B cell (primary cell): ENCODE measurements at regions of chr6 and their contacts with region 1.

Region 1: GRCh38 chr6:109073344-109074132 is 21.1 kb downstream of the SESN1 start:
- DNase-seq: peak; percentile 83
- ATAC-seq: peak; percentile 49
- H3K4me3 ChIP-seq: no peak overlapping the region
- H3K4me3 Mint-ChIP-seq: no peak overlapping the region
- H3K27ac ChIP-seq: no peak overlapping the region
- H3K27ac Mint-ChIP-seq: no peak overlapping the region
- H3K4me1 ChIP-seq: peaks cover 0 to 8% of the 10 kb centered on the region in 2 donors
- H3K4me1 Mint-ChIP-seq: peaks cover 5% of the 10 kb centered on the region
- H3K27me3 ChIP-seq: no peaks in the 10 kb centered on the region
- H3K27me3 Mint-ChIP-seq: no peaks in the 10 kb centered on the region
- CTCF ChIP-seq: peak; percentile 85

Region 2: GRCh38 chr6:108541838-108542759 is 531.4 kb before region 1 on chr6:
- CTCF ChIA-PET with region 1: interaction called, 247 read pairs
- POLR2A ChIA-PET with region 1: no interaction called
- intact Hi-C with region 1: loop called (anchors 1 kb)
- DNase-seq: peak; percentile 87
- ATAC-seq: peak; percentile 84
- H3K4me3 ChIP-seq: no peak overlapping the region
- H3K4me3 Mint-ChIP-seq: no peak overlapping the region
- H3K27ac ChIP-seq: no peak overlapping the region
- H3K27ac Mint-ChIP-seq: no peak overlapping the region
- H3K4me1 ChIP-seq: peaks cover 15 to 17% of the 10 kb centered on the region in 2 donors
- H3K4me1 Mint-ChIP-seq: peaks cover 12% of the 10 kb centered on the region
- H3K27me3 ChIP-seq: peaks cover 0 to 2% (median 0%) of the 10 kb centered on the region in 4 experiments
- H3K27me3 Mint-ChIP-seq: peaks cover 9% of the 10 kb centered on the region
- CTCF ChIP-seq: peak; percentile 93

Region 3: DNA sequence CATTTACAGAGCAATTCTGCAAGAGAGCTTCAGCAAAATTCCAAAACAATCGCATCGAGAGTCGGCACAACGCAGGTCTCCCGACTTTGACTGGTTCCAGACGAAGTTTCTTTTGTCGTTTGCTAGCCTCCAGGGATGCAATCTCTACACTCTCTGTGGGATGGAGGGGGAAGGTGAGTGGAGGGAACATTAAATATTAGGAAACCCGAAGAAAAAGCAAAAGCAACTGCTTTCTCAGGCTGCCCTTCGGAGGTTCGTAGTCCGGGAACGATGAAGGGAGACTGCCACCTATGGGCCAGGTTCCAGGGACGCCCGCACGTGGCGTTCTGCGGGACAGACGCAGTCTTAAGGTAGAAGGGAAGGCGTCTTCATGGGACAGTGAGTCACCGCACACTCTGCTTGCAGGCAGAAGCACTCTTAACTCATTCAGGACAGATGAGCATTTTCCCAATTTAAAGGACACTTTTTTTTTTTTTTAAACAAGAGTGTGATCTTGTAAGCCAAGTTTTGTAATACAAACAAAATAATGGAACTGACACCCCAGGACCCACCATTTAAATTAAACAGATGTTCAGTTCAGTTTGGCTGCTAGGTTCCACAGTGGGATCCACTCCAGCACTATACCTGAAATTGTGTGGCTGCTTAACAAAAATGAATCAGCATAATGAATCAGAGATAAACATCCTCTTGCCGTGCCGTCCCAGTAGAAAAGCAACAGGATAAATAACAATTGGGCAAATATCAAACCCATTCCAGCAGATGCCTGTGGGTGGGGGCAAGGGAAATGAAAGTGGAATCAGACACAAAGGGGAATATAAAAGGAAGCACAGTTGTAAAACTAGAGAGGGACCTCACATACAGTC is 291.1 kb before region 1 on chr6:
- CTCF ChIA-PET with region 1: interaction called, 6 read pairs
- POLR2A ChIA-PET with region 1: no interaction called
- intact Hi-C with region 1: loop called (anchors 1 kb)
- DNase-seq: peak; percentile 84
- ATAC-seq: peak; percentile 96
- H3K4me3 ChIP-seq: peak overlapping the region; percentile 43 to 78 (median 59)
- H3K4me3 Mint-ChIP-seq: peak overlapping the region; percentile 81
- H3K27ac ChIP-seq: no peak overlapping the region
- H3K27ac Mint-ChIP-seq: no peak overlapping the region
- H3K4me1 ChIP-seq: peaks cover 23 to 31% of the 10 kb centered on the region in 2 donors
- H3K4me1 Mint-ChIP-seq: peaks cover 25% of the 10 kb centered on the region
- H3K27me3 ChIP-seq: peaks cover 0 to 20% (median 8%) of the 10 kb centered on the region in 4 experiments
- H3K27me3 Mint-ChIP-seq: peaks cover 27% of the 10 kb centered on the region
- CTCF ChIP-seq: peak; percentile 84

Region 4: GRCh38 chr6:108896111-108896661 is 177.4 kb before region 1 on chr6:
- CTCF ChIA-PET with region 1: interaction called, 16 read pairs
- POLR2A ChIA-PET with region 1: no interaction called
- intact Hi-C with region 1: loop called (anchors 1 kb)
- DNase-seq: no peak
- ATAC-seq: no peak
- H3K4me3 ChIP-seq: peak overlapping the region in 1 of 5 experiments; percentile 16
- H3K4me3 Mint-ChIP-seq: peak overlapping the region; percentile 2
- H3K27ac ChIP-seq: peak overlapping the region in 1 of 2 donors; percentile 39
- H3K27ac Mint-ChIP-seq: peak overlapping the region; percentile 2
- H3K4me1 ChIP-seq: peaks cover 22 to 28% of the 10 kb centered on the region in 2 donors
- H3K4me1 Mint-ChIP-seq: peaks cover 17% of the 10 kb centered on the region
- H3K27me3 ChIP-seq: no peaks in the 10 kb centered on the region
- H3K27me3 Mint-ChIP-seq: no peaks in the 10 kb centered on the region
- CTCF ChIP-seq: no peak

Region 5: DNA sequence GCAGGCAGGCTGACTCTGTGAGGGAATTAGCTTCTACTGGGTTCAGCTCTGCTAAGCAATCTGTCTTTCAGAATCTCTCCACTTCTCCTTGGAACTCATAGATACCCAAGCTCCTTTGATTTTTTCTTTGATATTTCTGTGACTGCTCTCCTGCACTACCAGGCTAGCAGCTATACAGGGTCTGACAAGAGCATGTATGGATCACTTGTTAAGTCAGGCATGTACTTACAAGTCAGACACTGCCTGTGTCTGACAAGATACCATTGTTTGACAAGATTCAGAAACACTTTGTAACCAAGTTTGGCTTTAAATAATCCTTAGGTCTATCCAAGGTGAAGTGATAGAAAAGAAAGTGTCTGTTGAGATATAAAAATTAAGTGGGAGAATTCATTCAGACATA is 58.4 kb before region 1 on chr6:
- CTCF ChIA-PET with region 1: interaction called, 22 read pairs
- POLR2A ChIA-PET with region 1: no interaction called
- intact Hi-C with region 1: no loop called
- DNase-seq: no peak
- ATAC-seq: no peak
- H3K4me3 ChIP-seq: no peak overlapping the region
- H3K4me3 Mint-ChIP-seq: no peak overlapping the region
- H3K27ac ChIP-seq: peak overlapping the region; percentile 9 to 81
- H3K27ac Mint-ChIP-seq: peak overlapping the region; percentile 54
- H3K4me1 ChIP-seq: peaks cover 38 to 58% of the 10 kb centered on the region in 2 donors
- H3K4me1 Mint-ChIP-seq: peaks cover 47% of the 10 kb centered on the region
- H3K27me3 ChIP-seq: no peaks in the 10 kb centered on the region
- H3K27me3 Mint-ChIP-seq: no peaks in the 10 kb centered on the region
- CTCF ChIP-seq: no peak

Region 6: DNA sequence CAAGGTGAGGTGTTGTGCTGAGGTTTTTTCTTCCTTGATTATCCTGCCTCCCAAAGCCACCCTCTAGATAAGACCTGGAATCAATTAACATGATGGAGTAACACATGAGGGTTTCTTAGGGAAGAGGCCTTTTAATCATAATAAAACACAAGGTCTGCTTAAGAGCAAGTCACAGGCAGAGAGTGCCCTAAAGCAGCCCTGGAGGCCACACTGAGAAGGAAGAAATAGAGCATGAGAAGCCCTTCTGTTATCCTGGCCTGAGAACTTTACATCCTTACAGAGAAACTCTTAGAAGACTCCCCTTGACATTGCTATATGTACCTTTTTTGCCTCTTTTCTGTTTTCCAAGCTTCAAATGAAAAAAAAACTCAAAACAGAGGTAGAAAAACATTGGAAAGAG is 154.1 kb after region 1 on chr6:
- CTCF ChIA-PET with region 1: no interaction called
- POLR2A ChIA-PET with region 1: no interaction called
- intact Hi-C with region 1: no loop called
- DNase-seq: no peak
- ATAC-seq: no peak
- H3K4me3 ChIP-seq: no peak overlapping the region
- H3K4me3 Mint-ChIP-seq: no peak overlapping the region
- H3K27ac ChIP-seq: no peak overlapping the region
- H3K27ac Mint-ChIP-seq: no peak overlapping the region
- H3K4me1 ChIP-seq: no peaks in the 10 kb centered on the region
- H3K4me1 Mint-ChIP-seq: no peaks in the 10 kb centered on the region
- H3K27me3 ChIP-seq: no peaks in the 10 kb centered on the region
- H3K27me3 Mint-ChIP-seq: no peaks in the 10 kb centered on the region
- CTCF ChIP-seq: no peak

Region 7: GRCh38 chr6:109269953-109270517 is 196.5 kb after region 1 on chr6:
- CTCF ChIA-PET with region 1: no interaction called
- POLR2A ChIA-PET with region 1: no interaction called
- intact Hi-C with region 1: no loop called
- DNase-seq: no peak
- ATAC-seq: no peak
- H3K4me3 ChIP-seq: no peak overlapping the region
- H3K4me3 Mint-ChIP-seq: no peak overlapping the region
- H3K27ac ChIP-seq: no peak overlapping the region
- H3K27ac Mint-ChIP-seq: no peak overlapping the region
- H3K4me1 ChIP-seq: no peaks in the 10 kb centered on the region
- H3K4me1 Mint-ChIP-seq: no peaks in the 10 kb centered on the region
- H3K27me3 ChIP-seq: no peaks in the 10 kb centered on the region
- H3K27me3 Mint-ChIP-seq: no peaks in the 10 kb centered on the region
- CTCF ChIP-seq: no peak